Activated CD8-positive, alpha-beta memory T cell treated with anti-CD3 and anti-CD28 coated beads, Interleukin-2, amount 10 ng/mL, durations not matched to agents 7 days and 5 days (primary cell): ENCODE measurements at regions of chr14 and their contacts with region 1.

Region 1: GRCh38 chr14:73785873-73786695 is 65.5 kb upstream of the PTGR2 start:
- DNase-seq: peak; percentile 88
- ATAC-seq: peak; percentile 67
- H3K4me3 Mint-ChIP-seq: peak overlapping the region; percentile 85
- H3K27ac Mint-ChIP-seq: peak overlapping the region; percentile 95
- H3K4me1 Mint-ChIP-seq: peaks cover 56% of the 10 kb centered on the region
- H3K27me3 Mint-ChIP-seq: no peaks in the 10 kb centered on the region

Region 2: GRCh38 chr14:73753959-73754882 is 31.9 kb before region 1 on chr14:
- CTCF ChIA-PET with region 1: interaction called, 97 read pairs
- DNase-seq: peak; percentile 87
- ATAC-seq: peak; percentile 34
- H3K4me3 Mint-ChIP-seq: peak overlapping the region; percentile 77
- H3K27ac Mint-ChIP-seq: peak overlapping the region; percentile 92
- H3K4me1 Mint-ChIP-seq: peaks cover 91% of the 10 kb centered on the region
- H3K27me3 Mint-ChIP-seq: no peaks in the 10 kb centered on the region

Region 3: DNA sequence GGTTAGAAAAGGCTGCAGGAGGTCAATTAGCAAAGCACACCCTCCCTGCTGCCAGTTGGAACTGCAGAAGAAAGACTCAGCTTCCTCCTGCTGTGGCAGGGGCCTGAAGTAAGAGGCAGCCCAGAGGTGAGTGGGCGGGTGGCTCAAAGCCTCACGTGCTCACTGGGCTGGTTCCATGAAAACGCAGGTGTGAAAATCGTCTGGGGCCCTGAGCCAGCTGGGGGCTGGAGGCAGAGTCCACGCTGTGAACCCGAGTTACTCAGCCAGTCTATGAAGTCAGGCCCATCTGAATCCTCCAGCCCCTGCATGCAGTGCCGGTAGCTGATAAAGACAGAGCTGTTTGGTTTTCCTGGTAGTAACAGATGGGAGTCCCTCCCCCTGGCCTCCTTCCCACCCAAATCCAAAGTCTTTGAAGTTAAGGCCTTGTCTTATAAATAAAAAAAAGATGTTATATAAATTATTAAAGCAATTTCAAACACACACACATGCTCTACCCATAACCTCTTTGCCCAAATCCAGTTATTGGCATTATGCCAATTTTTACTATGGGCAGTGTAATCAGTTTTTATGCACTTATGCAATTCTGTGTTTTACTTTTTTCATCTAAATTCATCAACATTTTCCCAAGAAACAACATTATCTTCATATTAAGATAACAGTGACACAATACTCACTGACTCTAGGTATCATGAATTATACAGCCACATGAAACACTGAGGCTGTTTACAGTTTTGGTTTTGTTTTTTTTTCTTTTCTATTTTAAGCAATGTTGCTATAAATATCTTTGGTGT is 14.0 kb before region 1 on chr14:
- CTCF ChIA-PET with region 1: interaction called, 59 read pairs
- DNase-seq: peak; percentile 84
- ATAC-seq: peak; percentile 76
- H3K4me3 Mint-ChIP-seq: peak overlapping the region; percentile 49
- H3K27ac Mint-ChIP-seq: peak overlapping the region; percentile 86
- H3K4me1 Mint-ChIP-seq: peaks cover 72% of the 10 kb centered on the region
- H3K27me3 Mint-ChIP-seq: no peaks in the 10 kb centered on the region

Region 4: DNA sequence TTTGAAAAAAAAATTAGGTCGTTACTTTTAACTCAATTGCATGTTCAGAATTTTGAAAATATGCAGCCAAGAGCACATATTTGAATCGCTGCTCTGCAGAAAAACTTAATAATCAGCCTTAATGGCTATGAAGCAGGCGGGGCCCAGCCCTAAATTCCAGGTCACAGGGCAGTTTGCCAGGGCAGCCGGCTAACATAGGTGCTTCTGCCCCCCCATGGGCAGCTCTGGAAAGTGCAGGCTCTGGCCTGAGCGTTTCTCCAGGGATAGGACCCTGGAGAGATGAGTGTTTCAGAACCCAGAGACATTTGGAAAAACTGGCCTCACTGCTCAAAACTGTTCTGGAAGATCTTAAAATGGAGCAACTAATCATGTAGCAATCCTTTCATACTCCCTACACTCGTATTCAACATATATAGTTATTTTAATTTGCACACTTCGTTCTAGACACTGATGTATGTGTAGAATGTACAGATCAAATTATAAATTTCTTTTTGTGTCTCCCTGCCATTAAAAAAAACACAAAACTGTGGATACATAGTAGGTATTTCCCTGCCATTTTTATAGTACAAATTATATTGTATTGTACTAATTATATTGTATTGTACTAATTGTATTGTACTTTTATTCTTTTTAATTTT is 39.6 kb after region 1 on chr14:
- CTCF ChIA-PET with region 1: interaction called, 13 read pairs
- DNase-seq: peak; percentile 86
- ATAC-seq: peak; percentile 70
- H3K4me3 Mint-ChIP-seq: no peak overlapping the region
- H3K27ac Mint-ChIP-seq: no peak overlapping the region
- H3K4me1 Mint-ChIP-seq: peaks cover 37% of the 10 kb centered on the region
- H3K27me3 Mint-ChIP-seq: no peaks in the 10 kb centered on the region